ENCODE measurements at regions of chr11 and their contacts with region 1.

Region 1: GRCh38 chr11:101127699-101128570 is 1.7 kb downstream of the PGR start:
- DNase-seq: peak; percentile 47 to 85
- H3K4me3 ChIP-seq: peak overlapping the region; percentile 78 to 82
- H3K27ac ChIP-seq: peak overlapping the region; percentile 95 to 97
- H3K4me1 ChIP-seq: peaks cover 0 to 37% (median 13%) of the 10 kb centered on the region in 4 donors
- H3K27me3 ChIP-seq: no peaks in the 10 kb centered on the region
- CTCF ChIP-seq: peak in 1 of 2 experiments; percentile 4

Region 2: GRCh38 chr11:100687630-100688395 is 440.1 kb before region 1 on chr11:
- intact Hi-C with region 1: loop called (anchors 10 kb)
- DNase-seq: peak; percentile 46 to 78
- H3K4me3 ChIP-seq: peak overlapping the region; percentile 76 to 82
- H3K27ac ChIP-seq: peak overlapping the region; percentile 83 to 89
- H3K4me1 ChIP-seq: peaks cover 0 to 47% (median 12%) of the 10 kb centered on the region in 4 donors
- H3K27me3 ChIP-seq: no peaks in the 10 kb centered on the region
- CTCF ChIP-seq: peak; percentile 63 to 70

Region 3: GRCh38 chr11:101034076-101034475 is 93.9 kb before region 1 on chr11:
- intact Hi-C with region 1: no loop called
- DNase-seq: peak; percentile 47 to 66
- H3K4me3 ChIP-seq: no peak overlapping the region
- H3K27ac ChIP-seq: peak overlapping the region; percentile 39 to 63
- H3K4me1 ChIP-seq: peaks cover 0 to 30% (median 6%) of the 10 kb centered on the region in 4 donors
- H3K27me3 ChIP-seq: no peaks in the 10 kb centered on the region
- CTCF ChIP-seq: no peak

Region 4: DNA sequence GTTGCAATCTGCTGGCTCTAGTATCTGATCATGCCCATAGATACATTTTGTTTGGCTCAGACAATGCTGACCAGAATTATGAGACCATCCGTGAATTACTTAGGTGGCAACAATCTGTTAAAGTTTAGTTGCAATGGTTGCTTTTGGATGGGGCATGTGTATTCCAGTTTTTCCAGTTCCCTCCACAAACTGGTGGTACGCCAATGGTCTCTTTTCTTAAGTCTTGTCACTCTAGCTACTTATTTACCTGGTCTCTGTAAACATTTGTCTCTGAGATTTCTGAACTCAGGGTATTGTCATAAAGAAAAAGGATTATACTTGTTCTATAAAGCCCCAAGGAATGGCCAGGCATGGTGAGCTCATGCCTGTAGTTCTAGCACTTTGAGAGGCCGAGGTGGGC is 64.2 kb before region 1 on chr11:
- intact Hi-C with region 1: no loop called
- DNase-seq: no peak
- H3K4me3 ChIP-seq: no peak overlapping the region
- H3K27ac ChIP-seq: no peak overlapping the region
- H3K4me1 ChIP-seq: peaks cover 0 to 59% (median 0%) of the 10 kb centered on the region in 4 donors
- H3K27me3 ChIP-seq: no peaks in the 10 kb centered on the region
- CTCF ChIP-seq: no peak

Region 5: DNA sequence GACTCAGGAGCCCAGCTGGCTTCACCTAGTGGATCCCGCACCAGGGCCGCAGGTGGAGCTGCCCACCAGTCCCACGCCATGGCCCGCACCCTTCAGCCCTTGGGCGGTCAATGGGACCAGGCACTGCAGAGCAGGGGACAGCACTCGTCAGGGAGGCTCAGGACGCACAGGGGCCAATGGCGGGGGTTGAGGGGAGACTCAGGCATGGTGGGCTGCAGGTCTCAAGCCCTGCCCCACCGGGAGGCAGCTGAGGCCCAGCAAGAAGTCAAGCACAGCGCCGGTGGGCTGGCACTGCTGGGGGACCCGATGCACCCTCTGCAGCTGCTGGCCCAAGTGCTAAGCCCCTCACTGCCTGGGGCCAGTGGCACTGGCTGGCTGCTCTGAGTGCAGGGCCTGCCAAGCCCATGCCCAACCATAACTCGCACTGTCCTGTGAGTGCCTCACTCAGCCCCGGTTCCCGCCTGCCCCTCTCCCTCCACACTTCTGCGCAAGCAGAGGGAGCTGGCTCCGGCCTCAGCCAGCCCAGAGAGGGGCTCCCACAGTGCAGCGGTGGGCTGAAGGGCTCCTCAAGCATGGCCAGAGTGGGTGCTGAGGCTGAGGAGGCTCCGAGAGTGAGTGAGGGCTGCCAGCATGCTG is 113.3 kb after region 1 on chr11:
- intact Hi-C with region 1: no loop called
- DNase-seq: no peak
- H3K4me3 ChIP-seq: no peak overlapping the region
- H3K27ac ChIP-seq: no peak overlapping the region
- H3K4me1 ChIP-seq: peaks cover 0 to 27% (median 0%) of the 10 kb centered on the region in 4 donors
- H3K27me3 ChIP-seq: no peaks in the 10 kb centered on the region
- CTCF ChIP-seq: no peak